ENCODE measurements at regions of chr4 and their contacts with region 1.

Region 1: DNA sequence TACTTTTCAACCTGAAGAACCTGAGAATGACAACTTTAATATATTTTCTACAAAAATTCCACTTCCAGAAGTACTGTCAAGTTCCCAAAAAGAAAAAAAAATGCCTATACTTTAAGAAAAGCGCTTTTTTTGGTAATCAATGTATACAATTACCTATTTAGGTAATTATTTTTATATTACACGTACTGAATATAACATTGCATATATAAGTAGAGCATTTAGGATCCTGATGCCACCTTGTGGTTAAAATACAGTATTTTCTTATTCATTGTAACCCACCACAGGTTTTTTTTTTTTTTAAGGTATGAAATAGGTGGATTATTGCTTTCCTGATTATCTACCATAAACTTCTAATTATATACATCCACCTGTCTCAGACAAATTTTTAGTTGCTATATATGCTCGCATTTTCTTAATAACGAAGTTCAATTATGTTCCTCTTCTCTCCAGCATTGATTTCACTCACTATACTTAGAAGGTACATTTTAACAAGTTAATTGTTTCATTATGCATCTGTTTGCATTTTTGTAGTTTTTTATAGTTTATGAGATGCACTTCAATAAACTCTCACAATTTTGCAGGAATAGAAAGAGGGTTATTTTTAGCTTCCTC is 5.2 kb downstream of the MAP9 start:
- DNase-seq: no peak
- H3K4me3 Mint-ChIP-seq: no peak overlapping the region
- H3K27ac Mint-ChIP-seq: no peak overlapping the region
- H3K4me1 Mint-ChIP-seq: peaks cover 13% of the 10 kb centered on the region
- H3K27me3 Mint-ChIP-seq: no peaks in the 10 kb centered on the region

Region 2: DNA sequence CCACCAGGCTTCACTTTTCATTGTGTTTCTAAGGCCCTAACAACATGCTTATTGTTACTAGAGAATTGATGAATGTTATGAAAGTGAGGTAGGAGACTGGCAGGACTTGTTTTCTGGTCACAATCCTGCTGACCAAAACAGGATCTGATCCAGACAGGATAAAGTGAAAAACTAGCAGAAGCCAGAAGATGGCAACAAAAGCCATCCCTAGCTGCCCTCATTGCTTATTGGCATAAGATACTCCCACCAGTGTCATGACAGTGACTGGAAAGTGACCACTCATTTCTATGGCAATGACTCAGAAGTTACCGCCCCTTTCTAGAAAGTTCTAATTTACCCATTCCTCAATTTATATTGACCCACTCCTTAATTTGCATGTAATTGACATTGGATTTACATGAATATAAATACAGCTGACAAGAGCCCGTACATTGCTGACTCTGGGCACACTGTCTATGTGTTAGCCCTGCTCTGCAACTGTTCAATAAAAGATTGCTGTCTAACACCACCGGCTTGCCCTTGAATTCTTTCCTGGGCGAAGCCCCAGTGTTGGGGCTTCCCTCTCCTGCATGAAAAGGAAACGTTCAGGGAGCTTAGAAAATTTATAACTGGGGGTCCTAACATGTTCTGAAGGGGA is 729.0 kb before region 1 on chr4:
- intact Hi-C with region 1: loop called (anchors 5 kb)
- DNase-seq: no peak
- H3K4me3 Mint-ChIP-seq: no peak overlapping the region
- H3K27ac Mint-ChIP-seq: no peak overlapping the region
- H3K4me1 Mint-ChIP-seq: no peaks in the 10 kb centered on the region
- H3K27me3 Mint-ChIP-seq: peaks cover 2% of the 10 kb centered on the region

Region 3: GRCh38 chr4:154807042-154807630 is 564.4 kb before region 1 on chr4:
- intact Hi-C with region 1: loop called (anchors 1 kb)
- DNase-seq: no peak
- H3K4me3 Mint-ChIP-seq: no peak overlapping the region
- H3K27ac Mint-ChIP-seq: no peak overlapping the region
- H3K4me1 Mint-ChIP-seq: no peaks in the 10 kb centered on the region
- H3K27me3 Mint-ChIP-seq: peaks cover 5% of the 10 kb centered on the region

Region 4: DNA sequence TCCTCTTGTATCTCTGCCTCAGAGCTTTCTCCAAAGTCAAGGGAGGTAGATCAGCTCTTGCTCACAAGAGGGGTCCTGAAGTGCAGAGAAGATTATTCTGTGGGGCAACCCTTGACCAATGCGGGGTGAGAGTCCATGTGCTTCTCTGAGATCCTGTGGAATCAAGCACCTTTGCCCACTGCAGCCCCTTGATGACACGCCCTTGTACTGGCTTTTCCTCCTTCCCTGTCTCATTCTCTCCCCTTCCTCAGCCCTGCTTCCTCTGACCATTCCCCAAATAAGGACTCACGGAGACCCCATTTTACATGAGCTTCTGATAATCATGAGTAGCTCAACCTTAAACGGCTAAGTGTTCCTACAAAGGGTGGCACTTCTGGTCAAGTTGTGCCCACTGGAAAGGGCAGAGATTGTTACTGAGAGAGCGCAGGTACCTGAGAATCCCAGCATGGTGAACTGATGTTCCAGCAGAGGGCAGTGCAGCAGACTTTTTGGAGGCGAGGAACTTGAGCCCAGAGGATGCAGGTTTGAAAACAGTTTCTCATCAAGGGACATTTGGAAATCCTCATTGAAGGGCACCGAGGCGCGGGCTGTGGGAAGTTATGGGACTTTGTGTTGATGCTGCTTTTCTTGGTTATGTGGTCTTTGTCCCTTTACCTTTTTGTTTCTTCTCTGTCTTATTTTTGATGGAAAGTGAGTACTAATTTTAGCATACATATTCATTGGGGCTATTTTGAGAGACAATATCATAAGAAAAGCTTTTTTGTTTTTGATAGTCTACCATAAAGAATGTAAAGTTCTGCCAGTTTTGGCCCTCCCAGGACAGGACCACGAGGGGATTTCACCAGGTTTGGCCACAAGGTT is 389.1 kb before region 1 on chr4:
- intact Hi-C with region 1: loop called (anchors 1 kb)
- DNase-seq: peak; percentile 2
- H3K4me3 Mint-ChIP-seq: no peak overlapping the region
- H3K27ac Mint-ChIP-seq: no peak overlapping the region
- H3K4me1 Mint-ChIP-seq: no peaks in the 10 kb centered on the region
- H3K27me3 Mint-ChIP-seq: peaks cover 4% of the 10 kb centered on the region

Region 5: GRCh38 chr4:155197757-155198156 is 173.8 kb before region 1 on chr4:
- intact Hi-C with region 1: no loop called
- DNase-seq: no peak
- H3K4me3 Mint-ChIP-seq: no peak overlapping the region
- H3K27ac Mint-ChIP-seq: no peak overlapping the region
- H3K4me1 Mint-ChIP-seq: no peaks in the 10 kb centered on the region
- H3K27me3 Mint-ChIP-seq: peaks cover 1% of the 10 kb centered on the region

Measured in activated T-helper 1 cell treated with anti-CD3 and anti-CD28 coated beads, Interleukin-12 subunit alpha, Interleukin-12 subunit beta, Interleukin-2, Interleukin-4 antibody, amounts not matched to agents 30 ng/mL and 10 ng/mL and 1 ng/mL, durations not matched to agents 14 hours and 24 hours and 36 hours (primary cell).